ENCODE measurements at regions of chr11 and their contacts with region 1.

Region 1: DNA sequence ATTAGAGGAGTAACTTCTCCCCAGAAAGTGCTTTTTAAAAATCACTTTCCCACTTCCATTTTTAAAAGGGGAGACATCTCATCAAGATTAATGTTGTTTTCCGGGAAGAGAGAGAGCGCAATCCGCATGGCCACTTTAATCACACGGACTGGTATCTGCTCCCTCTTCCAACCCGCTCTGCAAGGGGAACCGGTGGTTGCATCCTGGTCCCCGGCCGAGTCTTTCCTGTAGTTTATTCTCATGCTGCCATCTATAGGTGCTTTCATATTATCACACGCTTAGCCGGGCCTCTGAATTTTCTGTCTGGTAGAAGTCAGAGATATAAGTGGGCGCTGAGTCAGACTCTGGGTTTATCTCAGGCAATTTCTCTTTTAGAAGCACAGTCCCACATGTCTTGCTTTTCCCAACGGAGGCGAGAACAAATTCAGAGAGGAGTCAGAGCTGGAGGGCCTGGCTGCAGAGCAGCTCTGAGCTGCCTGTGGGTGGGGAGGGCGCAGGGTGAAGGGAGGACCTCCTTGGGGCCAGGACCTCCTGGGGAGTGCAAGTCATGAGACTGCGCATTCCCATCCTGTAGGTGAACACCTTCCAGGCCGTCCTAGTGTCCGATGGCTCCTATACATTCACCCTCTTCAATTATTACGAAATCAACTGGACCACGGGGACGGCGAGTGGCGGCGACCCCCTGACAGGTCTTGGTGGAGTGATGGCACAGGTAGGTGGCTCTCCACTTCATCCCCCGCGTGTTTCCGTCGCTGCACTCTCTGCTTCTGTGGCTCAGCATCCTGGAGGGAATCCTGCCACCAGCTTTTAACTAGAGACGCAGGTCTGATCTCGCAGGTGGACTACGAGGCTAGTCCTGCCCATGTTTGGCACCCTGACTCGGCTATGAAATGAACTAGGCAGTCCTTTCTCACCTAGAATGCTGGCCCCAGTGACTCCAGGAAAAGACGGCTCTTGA is 11.7 kb downstream of the TECTA start:
- DNase-seq: peak; percentile 51
- H3K4me3 Mint-ChIP-seq: no peak overlapping the region
- H3K27ac Mint-ChIP-seq: no peak overlapping the region
- H3K4me1 Mint-ChIP-seq: no peaks in the 10 kb centered on the region
- H3K27me3 Mint-ChIP-seq: peaks cover 10% of the 10 kb centered on the region

Region 2: GRCh38 chr11:120945042-120945441 is 167.7 kb before region 1 on chr11:
- CTCF ChIA-PET with region 1: no interaction called
- POLR2A ChIA-PET with region 1: no interaction called
- intact Hi-C with region 1: loop called (anchors 1 kb)
- DNase-seq: no peak
- H3K4me3 Mint-ChIP-seq: no peak overlapping the region
- H3K27ac Mint-ChIP-seq: no peak overlapping the region
- H3K4me1 Mint-ChIP-seq: no peaks in the 10 kb centered on the region
- H3K27me3 Mint-ChIP-seq: peaks cover 19% of the 10 kb centered on the region

Measured in activated CD4-positive, alpha-beta memory T cell treated with anti-CD3 and anti-CD28 coated beads for 36 hours (primary cell).